ENCODE measurements at regions of chr12 and their contacts with region 1.

Region 1: DNA sequence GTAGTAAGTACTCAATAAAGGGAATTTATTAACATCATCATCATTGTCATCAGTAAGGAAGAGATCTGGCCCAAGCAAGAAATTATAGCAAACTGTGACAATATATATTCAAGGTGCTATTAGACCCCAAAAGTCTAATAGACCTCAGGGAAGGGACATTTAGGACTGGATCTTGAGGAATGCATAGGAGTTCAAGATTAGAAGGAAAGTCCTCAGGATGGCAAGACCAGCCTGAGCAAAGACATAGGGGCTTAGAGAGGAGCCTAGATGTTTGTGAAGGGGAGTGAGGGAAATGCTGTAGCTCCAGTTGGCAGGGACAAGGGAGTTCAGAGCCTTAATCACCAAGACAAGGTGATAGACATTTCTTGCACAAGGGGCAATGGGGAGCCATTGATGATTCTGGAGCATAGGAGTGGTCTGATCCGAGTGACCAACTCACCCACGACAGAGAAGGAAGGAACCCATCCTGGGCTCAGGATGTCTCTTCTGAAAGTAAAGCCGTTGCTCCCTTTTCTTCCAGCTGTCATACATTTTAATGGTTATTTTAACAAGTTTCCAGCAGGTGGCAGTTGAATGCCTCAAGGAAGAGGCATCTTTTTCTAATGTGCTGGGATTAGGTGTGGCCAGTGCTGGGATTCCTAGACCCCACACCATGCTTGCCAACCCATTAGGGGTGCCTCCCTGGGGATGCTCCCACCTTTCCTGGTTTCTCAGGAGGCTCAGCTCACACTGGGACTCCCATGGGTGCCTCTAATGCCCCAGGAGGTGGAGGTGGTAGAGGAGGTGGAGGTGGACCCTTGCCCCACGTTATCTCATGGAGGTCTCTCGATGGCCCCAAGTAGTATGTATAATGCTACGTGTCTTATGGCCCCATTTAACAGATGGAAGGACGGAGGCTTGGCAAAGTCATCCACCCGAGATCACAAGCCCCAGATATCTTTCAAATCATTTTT is 37.8 kb downstream of the PHETA1 start:
- DNase-seq: peak; percentile 59
- H3K4me3 ChIP-seq: no peak overlapping the region
- H3K27ac ChIP-seq: no peak overlapping the region
- H3K4me1 ChIP-seq: no peaks in the 10 kb centered on the region
- H3K27me3 ChIP-seq: peaks cover 0 to 3% of the 10 kb centered on the region in 2 experiments
- CTCF ChIP-seq: peak; percentile 39 to 54
- POLR2A ChIP-seq: no peak

Region 2: DNA sequence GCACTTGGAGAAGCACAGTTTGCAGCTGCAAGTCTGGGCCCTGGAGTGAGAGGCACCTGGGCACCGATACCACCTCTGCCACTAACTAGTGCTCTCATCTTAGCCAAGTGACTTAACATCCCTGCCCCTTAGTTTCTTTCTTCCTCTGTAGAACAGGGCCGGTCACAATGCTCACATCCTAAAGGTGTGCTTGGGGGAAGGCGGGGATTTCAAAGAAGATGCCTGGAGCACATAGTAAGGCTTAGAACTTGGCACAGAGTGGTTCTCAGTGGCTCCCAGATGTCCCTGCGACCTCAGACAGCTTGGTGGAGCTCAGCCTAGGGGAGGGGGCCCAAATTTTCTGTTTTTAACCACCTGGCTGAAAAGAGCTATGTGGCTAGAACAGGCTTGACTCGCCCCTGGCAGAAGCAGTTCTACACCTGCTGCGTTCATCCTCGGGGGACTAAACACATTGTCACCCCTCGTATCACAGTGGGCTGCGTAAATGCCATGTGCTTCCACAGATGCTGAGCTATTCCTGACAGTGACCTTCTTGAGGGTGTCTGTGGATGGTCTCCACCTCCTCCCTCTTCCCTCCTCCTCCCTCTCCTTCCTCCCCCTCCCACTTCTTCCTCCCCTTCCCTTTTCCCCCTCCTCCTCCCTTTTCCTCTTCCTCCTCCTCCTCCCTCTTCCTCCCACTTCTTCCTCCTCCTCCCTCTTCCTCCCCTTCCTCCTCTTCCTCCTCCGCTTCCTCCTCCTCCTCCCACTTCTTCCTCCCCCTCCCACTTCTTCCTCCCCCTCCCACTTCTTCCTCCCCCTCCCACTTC is 74.2 kb before region 1 on chr12:
- CTCF ChIA-PET with region 1: no interaction called
- POLR2A ChIA-PET with region 1: no interaction called
- dilution Hi-C with region 1: no loop called
- intact Hi-C with region 1: no loop called
- DNase-seq: no peak
- H3K4me3 ChIP-seq: no peak overlapping the region
- H3K27ac ChIP-seq: no peak overlapping the region
- H3K4me1 ChIP-seq: no peaks in the 10 kb centered on the region
- H3K27me3 ChIP-seq: no peaks in the 10 kb centered on the region
- CTCF ChIP-seq: no peak
- POLR2A ChIP-seq: no peak

Region 3: DNA sequence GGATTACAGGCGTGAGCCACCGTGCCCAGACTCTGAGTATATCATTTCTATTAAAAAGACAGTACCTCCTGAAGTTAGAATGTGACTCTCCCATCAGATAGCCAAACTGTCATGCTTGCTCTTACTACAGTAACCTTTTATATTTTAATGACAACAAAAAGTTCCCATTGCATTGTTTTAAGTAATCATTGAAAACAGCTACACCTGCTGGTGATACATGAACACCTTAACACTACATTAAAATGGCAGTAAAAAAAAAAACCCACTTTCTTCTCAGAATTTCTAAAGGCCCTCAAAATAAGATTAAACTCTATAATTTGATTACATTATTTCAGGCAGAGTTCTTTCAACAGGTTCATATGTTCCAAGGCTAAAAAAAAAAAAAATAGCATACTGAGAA is 151.4 kb after region 1 on chr12:
- CTCF ChIA-PET with region 1: interaction called, 10 read pairs
- POLR2A ChIA-PET with region 1: no interaction called
- dilution Hi-C with region 1: no loop called
- intact Hi-C with region 1: loop called (anchors 1 kb)
- DNase-seq: no peak
- H3K4me3 ChIP-seq: no peak overlapping the region
- H3K27ac ChIP-seq: no peak overlapping the region
- H3K4me1 ChIP-seq: no peaks in the 10 kb centered on the region
- H3K27me3 ChIP-seq: no peaks in the 10 kb centered on the region
- CTCF ChIP-seq: peak in 1 of 2 donors; percentile 16
- POLR2A ChIP-seq: no peak

Region 4: DNA sequence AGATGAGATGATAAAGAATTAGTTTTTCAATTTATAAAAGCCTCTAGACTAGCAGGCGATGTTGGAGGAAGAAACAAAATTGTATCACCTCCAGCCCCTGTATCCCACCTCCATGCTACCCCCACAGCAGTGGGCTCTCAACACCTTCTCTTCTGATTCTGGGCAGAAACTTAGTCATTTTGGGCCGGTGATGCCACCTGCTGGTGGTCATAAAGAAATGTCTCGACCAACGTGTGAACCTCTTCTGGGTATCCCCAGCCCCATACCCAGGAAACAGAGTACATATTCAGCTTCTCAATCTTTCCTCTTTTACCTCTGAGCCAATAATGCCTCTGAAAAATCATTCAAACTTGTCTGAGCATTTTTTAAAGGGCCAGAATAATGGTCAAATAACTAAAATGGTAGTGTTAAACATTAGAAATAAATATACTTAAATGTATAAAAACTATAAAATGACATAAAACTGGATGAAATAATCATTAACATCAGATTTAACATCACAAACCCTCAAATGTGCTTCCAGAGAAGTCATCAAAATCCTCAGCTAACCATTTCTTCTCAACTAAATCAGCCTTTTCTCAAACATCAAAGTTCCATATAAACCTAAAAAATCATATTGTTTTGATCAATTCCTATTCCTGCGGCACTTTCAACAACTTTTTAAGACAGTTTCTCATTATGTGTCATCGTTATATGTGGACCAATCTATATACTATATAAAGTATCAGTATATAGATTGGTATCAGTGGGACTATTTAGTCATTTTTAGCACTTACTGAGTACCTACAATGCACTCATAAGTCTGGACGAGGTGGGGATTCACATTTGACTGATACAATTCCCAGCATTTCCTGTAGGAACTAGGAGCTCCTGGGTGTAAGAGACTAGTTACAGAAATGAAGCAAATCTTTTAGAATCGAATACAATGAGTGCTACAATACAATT is 198.6 kb after region 1 on chr12:
- CTCF ChIA-PET with region 1: interaction called, 8 read pairs
- POLR2A ChIA-PET with region 1: no interaction called
- dilution Hi-C with region 1: no loop called
- intact Hi-C with region 1: loop called (anchors 1 kb)
- DNase-seq: peak; percentile 73
- H3K4me3 ChIP-seq: no peak overlapping the region
- H3K27ac ChIP-seq: no peak overlapping the region
- H3K4me1 ChIP-seq: no peaks in the 10 kb centered on the region
- H3K27me3 ChIP-seq: no peaks in the 10 kb centered on the region
- CTCF ChIP-seq: peak; percentile 69 to 70
- POLR2A ChIP-seq: no peak

Measured in endothelial cell of umbilical vein (primary cell).